CD8-positive, alpha-beta T cell (primary cell): ENCODE measurements at regions of chr6 and their contacts with region 1.

Region 1: GRCh38 chr6:13336553-13336952 is 8.2 kb upstream of the TBC1D7 start:
- DNase-seq: peak; percentile 57 to 83 (median 71)
- ATAC-seq: peak; percentile 94
- H3K4me3 ChIP-seq: no peak overlapping the region
- H3K4me3 Mint-ChIP-seq: no peak overlapping the region
- H3K27ac ChIP-seq: no peak overlapping the region
- H3K27ac Mint-ChIP-seq: no peak overlapping the region
- H3K4me1 ChIP-seq: no peaks in the 10 kb centered on the region
- H3K4me1 Mint-ChIP-seq: peaks cover 7% of the 10 kb centered on the region
- H3K27me3 ChIP-seq: no peaks in the 10 kb centered on the region
- H3K27me3 Mint-ChIP-seq: no peaks in the 10 kb centered on the region
- CTCF ChIP-seq: peak; percentile 83

Region 2: GRCh38 chr6:13355043-13355951 is 18.7 kb after region 1 on chr6:
- CTCF ChIA-PET with region 1: interaction called, 5 read pairs
- POLR2A ChIA-PET with region 1: interaction called, 4 read pairs
- intact Hi-C with region 1: loop called in 1 of 2 experiments (anchors 2 kb)
- DNase-seq: peak in 3 of 9 experiments; percentile 16 to 71 (median 49)
- ATAC-seq: peak; percentile 68
- H3K4me3 ChIP-seq: peak overlapping the region; percentile 16 to 22
- H3K4me3 Mint-ChIP-seq: peak overlapping the region; percentile 78
- H3K27ac ChIP-seq: peak overlapping the region; percentile 10 to 50
- H3K27ac Mint-ChIP-seq: peak overlapping the region; percentile 93
- H3K4me1 ChIP-seq: peaks cover 29% of the 10 kb centered on the region
- H3K4me1 Mint-ChIP-seq: peaks cover 41% of the 10 kb centered on the region
- H3K27me3 ChIP-seq: no peaks in the 10 kb centered on the region
- H3K27me3 Mint-ChIP-seq: no peaks in the 10 kb centered on the region
- CTCF ChIP-seq: no peak

Region 3: DNA sequence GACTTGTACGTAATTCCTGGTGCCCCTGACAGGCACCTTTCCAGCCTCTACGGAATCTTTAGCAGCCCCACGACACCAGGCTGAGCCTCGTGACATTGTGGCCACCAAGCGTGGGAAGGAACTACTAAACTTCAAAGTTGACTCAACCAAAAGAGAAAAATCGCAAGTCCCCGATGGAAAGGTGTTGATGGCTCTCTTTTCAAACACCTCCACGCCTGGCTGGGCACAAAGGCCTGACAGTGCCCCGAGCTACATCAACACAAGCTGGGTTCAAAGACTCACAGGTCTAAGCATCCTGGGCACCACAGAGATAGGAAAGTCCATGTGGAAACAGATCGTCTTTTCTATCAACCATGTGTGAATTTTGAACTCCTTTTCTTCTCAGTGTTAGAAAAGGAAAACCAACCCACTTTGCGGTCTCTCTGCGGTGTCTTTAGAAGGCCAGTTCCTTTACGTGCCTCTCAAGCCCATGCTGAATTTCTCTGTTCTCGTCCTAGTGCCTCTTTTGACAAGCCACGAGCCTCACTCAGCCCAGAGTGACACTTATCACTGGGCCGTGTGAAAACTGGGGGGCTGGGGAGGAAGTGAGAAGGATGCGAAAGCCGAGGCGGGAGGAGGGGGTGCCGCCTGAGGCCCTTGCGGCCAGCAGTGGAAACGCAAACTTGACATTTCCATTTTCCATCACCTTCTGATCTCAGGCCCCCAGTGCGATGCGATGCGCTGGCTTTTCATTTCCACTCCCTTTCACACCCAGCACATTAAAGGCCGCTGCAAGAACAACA is 91.4 kb after region 1 on chr6:
- CTCF ChIA-PET with region 1: interaction called, 3 read pairs
- POLR2A ChIA-PET with region 1: no interaction called
- intact Hi-C with region 1: loop called in 1 of 2 experiments (anchors 5 kb)
- DNase-seq: peak; percentile 25 to 92 (median 68)
- ATAC-seq: peak; percentile 80
- H3K4me3 ChIP-seq: peak overlapping the region; percentile 1 to 19
- H3K4me3 Mint-ChIP-seq: peak overlapping the region; percentile 70
- H3K27ac ChIP-seq: peak overlapping the region; percentile 8 to 89
- H3K27ac Mint-ChIP-seq: peak overlapping the region; percentile 89
- H3K4me1 ChIP-seq: peaks cover 26% of the 10 kb centered on the region
- H3K4me1 Mint-ChIP-seq: peaks cover 61% of the 10 kb centered on the region
- H3K27me3 ChIP-seq: no peaks in the 10 kb centered on the region
- H3K27me3 Mint-ChIP-seq: no peaks in the 10 kb centered on the region
- CTCF ChIP-seq: peak; percentile 25

Region 4: DNA sequence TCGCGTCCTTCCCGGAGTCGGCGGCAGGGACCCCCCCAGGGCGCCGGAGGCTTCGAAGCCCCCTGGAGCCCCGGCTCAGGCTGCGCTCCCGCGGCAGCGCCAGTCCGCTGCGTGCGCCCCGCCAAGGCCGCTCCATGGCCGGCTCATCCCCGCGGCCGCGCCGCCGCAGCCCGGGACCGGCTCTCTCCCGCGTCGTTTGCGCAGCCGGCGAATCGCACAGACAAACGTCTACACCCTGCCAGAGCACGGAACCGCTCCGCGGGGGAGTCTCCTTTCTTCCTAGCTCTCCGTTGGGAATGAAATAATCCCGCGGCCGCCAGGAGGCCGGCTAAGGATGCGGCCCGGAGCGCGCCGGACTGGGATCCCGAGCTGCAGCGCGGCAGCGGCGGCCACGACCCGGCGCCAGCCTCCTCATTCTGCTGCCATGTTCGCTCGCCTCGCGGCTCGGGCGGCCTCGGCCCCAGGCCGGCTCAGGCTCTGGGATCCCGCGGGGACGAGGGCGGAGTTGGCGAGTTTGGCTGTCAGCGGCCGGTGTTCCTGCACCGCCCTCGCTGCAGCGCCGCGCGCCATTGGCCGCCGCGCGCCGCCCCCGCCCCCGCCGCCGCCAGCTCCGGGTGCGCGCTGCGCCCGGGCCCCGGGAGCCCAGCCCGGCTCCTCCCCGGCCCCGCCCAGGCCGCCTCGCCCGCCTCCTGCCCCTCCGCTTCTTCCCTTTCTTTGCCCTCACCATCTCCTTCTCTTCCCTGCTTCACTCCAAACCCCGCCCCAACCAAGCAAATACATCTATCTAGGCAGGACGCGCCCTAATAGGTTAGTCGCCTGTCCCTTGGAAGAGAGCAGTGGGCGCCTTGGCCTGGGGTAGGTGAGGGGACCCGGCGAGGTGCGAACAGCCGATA is 150.8 kb after region 1 on chr6 and contains the start of gene GFOD1:
- CTCF ChIA-PET with region 1: interaction called, 3 read pairs
- POLR2A ChIA-PET with region 1: interaction called, 3 read pairs
- intact Hi-C with region 1: loop called (anchors 2 to 5 kb)
- DNase-seq: peak; percentile 28 to 87 (median 69)
- ATAC-seq: peak; percentile 76
- H3K4me3 ChIP-seq: peak within 1 kb of the TSS; percentile 72 to 80
- H3K4me3 Mint-ChIP-seq: peak within 1 kb of the TSS; percentile 86
- H3K27ac ChIP-seq: peak within 1 kb of the TSS; percentile 36 to 51
- H3K27ac Mint-ChIP-seq: peak within 1 kb of the TSS; percentile 60
- H3K4me1 ChIP-seq: peaks cover 11% of the 10 kb centered on the region
- H3K4me1 Mint-ChIP-seq: peaks cover 36% of the 10 kb centered on the region
- H3K27me3 ChIP-seq: no peaks in the 10 kb centered on the region
- H3K27me3 Mint-ChIP-seq: peaks cover 7% of the 10 kb centered on the region
- CTCF ChIP-seq: no peak
- total RNA-seq, gene GFOD1: 5.6 to 7.6 TPM

Region 5: GRCh38 chr6:13538084-13538483 is 201.5 kb after region 1 on chr6:
- CTCF ChIA-PET with region 1: interaction called, 19 read pairs
- POLR2A ChIA-PET with region 1: no interaction called
- intact Hi-C with region 1: loop called (anchors 1 kb)
- DNase-seq: peak in 2 of 9 experiments; percentile 52 to 66
- ATAC-seq: peak; percentile 36
- H3K4me3 ChIP-seq: no peak overlapping the region
- H3K4me3 Mint-ChIP-seq: no peak overlapping the region
- H3K27ac ChIP-seq: no peak overlapping the region
- H3K27ac Mint-ChIP-seq: no peak overlapping the region
- H3K4me1 ChIP-seq: no peaks in the 10 kb centered on the region
- H3K4me1 Mint-ChIP-seq: no peaks in the 10 kb centered on the region
- H3K27me3 ChIP-seq: no peaks in the 10 kb centered on the region
- H3K27me3 Mint-ChIP-seq: no peaks in the 10 kb centered on the region
- CTCF ChIP-seq: peak; percentile 44

Region 6: GRCh38 chr6:13814176-13814937 is 477.8 kb after region 1 on chr6 and contains the start of gene MCUR1:
- CTCF ChIA-PET with region 1: no interaction called
- POLR2A ChIA-PET with region 1: no interaction called
- intact Hi-C with region 1: loop called in 1 of 2 experiments (anchors 10 kb)
- DNase-seq: peak; percentile 51 to 92 (median 74)
- ATAC-seq: peak; percentile 80
- H3K4me3 ChIP-seq: peak within 1 kb of the TSS; percentile 71
- H3K4me3 Mint-ChIP-seq: peak within 1 kb of the TSS; percentile 87
- H3K27ac ChIP-seq: peak within 1 kb of the TSS; percentile 61 to 76
- H3K27ac Mint-ChIP-seq: peak within 1 kb of the TSS; percentile 85
- H3K4me1 ChIP-seq: peaks cover 14% of the 10 kb centered on the region
- H3K4me1 Mint-ChIP-seq: peaks cover 34% of the 10 kb centered on the region
- H3K27me3 ChIP-seq: no peaks in the 10 kb centered on the region
- H3K27me3 Mint-ChIP-seq: no peaks in the 10 kb centered on the region
- CTCF ChIP-seq: no peak
- total RNA-seq, gene MCUR1: 2.1 to 3.4 TPM